ENCODE measurements at regions of chr4 and their contacts with region 1.

Region 1: DNA sequence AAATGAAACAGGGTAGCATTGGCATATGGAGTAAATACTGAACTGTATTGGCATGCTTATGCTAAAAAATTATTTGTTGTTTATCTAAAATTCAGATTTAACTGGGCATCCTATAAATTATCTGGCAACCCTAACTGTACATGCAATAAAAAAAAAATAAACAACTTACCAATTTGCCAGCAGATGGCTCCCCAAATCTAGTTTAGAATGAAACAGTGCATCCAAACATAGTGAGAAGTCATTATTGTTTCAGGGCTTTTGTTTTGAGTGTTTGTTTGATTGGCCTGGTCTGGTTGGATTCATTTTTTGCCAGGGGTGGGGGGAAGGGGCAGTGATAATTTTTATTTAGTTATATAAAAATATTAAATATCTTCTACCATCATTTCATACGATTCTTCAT is 12.8 kb upstream of the NSUN7 start:
- DNase-seq: no peak
- H3K4me3 ChIP-seq: no peak overlapping the region
- H3K27ac ChIP-seq: no peak overlapping the region
- H3K4me1 ChIP-seq: peaks cover 0 to 33% (median 8%) of the 10 kb centered on the region in 6 donors
- H3K27me3 ChIP-seq: no peaks in the 10 kb centered on the region
- CTCF ChIP-seq: peak in 6 of 11 experiments; percentile 6 to 40 (median 26)
- POLR2A ChIP-seq: no peak

Region 2: GRCh38 chr4:40829586-40829985 is 92.7 kb after region 1 on chr4:
- intact Hi-C with region 1: no loop called
- DNase-seq: no peak
- H3K4me3 ChIP-seq: no peak overlapping the region
- H3K27ac ChIP-seq: peak overlapping the region in 2 of 8 donors; percentile 48 to 51
- H3K4me1 ChIP-seq: peaks cover 0 to 11% (median 0%) of the 10 kb centered on the region in 6 donors
- H3K27me3 ChIP-seq: no peaks in the 10 kb centered on the region
- CTCF ChIP-seq: no peak
- POLR2A ChIP-seq: no peak

Region 3: DNA sequence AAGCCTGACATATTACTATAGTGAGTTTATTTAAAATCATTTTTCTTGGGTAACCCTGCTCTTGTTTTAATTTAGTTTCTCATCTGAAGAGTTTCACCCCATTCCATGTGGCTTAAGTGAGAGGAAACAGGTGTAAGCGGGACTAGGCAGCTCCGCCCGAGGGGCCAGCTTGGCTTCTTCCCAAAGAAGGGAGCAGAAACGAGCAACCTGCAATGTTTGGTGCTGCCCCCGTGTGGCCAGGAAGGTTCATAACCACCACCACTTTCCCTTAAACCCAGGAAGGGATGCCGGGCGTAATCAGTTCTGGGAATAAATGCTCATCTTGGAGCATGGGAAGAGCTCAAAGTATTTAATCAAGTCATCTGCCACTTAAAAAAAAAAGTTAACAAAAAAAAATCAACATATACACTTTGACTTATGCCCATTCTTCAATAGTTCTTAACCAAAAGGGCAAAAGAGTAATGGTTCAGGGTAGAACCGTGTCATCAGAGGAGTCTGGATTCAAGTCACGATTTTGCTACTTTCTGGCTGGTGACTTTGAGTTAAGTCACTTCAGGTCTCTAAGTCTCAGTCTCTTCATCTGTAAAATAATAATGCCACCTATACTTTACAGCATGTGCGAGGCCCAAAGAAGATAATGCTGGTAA is 160.8 kb after region 1 on chr4:
- intact Hi-C with region 1: loop called (anchors 5 kb)
- DNase-seq: peak; percentile 89
- H3K4me3 ChIP-seq: peak overlapping the region in 1 of 8 donors; percentile 45
- H3K27ac ChIP-seq: no peak overlapping the region
- H3K4me1 ChIP-seq: peaks cover 0 to 11% (median 8%) of the 10 kb centered on the region in 6 donors
- H3K27me3 ChIP-seq: no peaks in the 10 kb centered on the region
- CTCF ChIP-seq: peak; percentile 53 to 89 (median 74)
- POLR2A ChIP-seq: no peak